Mammary epithelial cell (primary cell): ENCODE measurements at regions of chr10 and their contacts with region 1.

Region 1: DNA sequence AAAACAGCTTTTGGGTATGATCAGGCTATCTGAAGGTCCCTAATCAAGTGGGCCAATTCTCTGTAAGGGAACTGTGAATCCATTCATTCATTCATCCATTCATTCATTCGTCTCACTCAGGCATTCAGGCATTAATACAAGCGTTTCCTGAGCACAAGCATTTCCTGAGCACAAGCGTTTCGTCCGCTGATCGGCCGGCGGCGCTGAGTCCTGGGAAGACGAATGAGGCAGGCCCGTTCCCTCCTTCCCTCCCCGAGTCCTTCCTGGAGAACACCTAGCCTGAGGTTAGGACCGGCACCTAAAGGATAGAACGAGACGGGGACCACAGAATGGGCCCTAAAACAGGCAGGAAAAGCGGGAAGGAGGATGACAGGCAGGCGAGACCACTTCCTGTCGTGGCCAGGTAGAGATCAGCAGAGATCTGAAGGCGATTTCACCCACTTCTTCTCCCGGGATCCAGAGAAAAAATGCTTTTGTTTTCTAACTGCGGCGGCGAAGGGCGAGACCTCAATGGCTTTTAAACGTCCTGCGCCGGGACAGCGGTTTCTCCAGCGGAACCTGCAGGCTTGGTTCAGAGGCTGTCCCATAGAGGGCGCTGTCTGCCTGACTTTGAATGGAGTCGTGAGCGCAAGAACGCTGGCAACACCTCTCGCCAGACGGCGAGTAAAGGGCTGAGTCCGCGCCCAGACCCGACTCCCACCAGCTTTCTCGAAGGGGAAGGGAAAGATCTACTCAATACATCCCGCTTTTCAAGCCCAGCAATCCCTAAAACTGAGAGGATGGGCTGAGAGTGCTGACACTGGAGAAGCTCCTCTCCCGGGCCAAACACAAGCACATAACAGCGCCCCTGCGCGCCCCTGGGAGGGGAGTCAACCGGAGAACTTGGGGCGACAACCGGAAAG is 2.9 kb upstream of the HMX3 start:
- DNase-seq: peak; percentile 70
- H3K4me3 ChIP-seq: peak overlapping the region in 2 of 3 experiments; percentile 5 to 14
- H3K27ac ChIP-seq: no peak overlapping the region
- H3K4me1 ChIP-seq: peaks cover 30% of the 10 kb centered on the region
- H3K27me3 ChIP-seq: peaks cover 43% of the 10 kb centered on the region
- CTCF ChIP-seq: peak; percentile 86 to 92

Region 2: GRCh38 chr10:123043409-123043925 is 89.4 kb before region 1 on chr10:
- CTCF ChIA-PET with region 1: interaction called, 4 read pairs
- dilution Hi-C with region 1: no loop called
- in situ Hi-C with region 1: loop called in 1 of 2 experiments (anchors 5 kb)
- intact Hi-C with region 1: loop called (anchors 1 kb)
- DNase-seq: peak; percentile 58
- H3K4me3 ChIP-seq: no peak overlapping the region
- H3K27ac ChIP-seq: no peak overlapping the region
- H3K4me1 ChIP-seq: no peaks in the 10 kb centered on the region
- H3K27me3 ChIP-seq: no peaks in the 10 kb centered on the region
- CTCF ChIP-seq: peak; percentile 84 to 91

Region 3: GRCh38 chr10:123272171-123272570 is 139.3 kb after region 1 on chr10:
- CTCF ChIA-PET with region 1: no interaction called
- dilution Hi-C with region 1: no loop called
- in situ Hi-C with region 1: no loop called
- intact Hi-C with region 1: loop called (anchors 5 kb)
- DNase-seq: no peak
- H3K4me3 ChIP-seq: no peak overlapping the region
- H3K27ac ChIP-seq: no peak overlapping the region
- H3K4me1 ChIP-seq: peaks cover 3% of the 10 kb centered on the region
- H3K27me3 ChIP-seq: peaks cover 9% of the 10 kb centered on the region
- CTCF ChIP-seq: peak in 1 of 2 donors; percentile 41

Region 4: DNA sequence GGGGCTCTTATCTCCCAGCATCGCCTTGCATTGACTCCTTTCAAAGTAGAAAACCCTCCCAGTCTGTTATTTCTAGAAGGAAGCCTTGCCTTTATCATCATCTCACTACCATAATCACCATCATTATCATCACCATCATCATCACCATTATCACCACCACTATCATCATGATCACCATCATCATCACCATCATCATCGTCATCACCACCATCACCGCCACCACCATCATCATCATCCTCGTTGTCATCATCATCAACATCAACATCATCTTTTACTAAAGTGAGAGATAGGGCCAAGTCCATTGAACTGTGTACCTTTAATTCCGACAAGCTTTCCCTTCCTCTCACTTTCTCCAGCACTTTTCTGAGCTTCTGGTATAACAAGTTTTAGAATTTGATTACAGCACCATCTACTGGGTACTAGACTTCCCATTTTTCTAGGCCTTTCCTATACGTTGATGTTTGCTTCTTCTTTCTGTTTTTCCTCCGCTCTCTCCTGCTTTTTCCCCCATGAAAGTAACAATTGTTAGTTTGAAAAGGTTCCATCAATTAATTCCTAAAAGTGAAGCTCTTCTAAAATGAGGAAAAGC is 247.8 kb after region 1 on chr10:
- CTCF ChIA-PET with region 1: interaction called, 3 read pairs
- dilution Hi-C with region 1: no loop called
- in situ Hi-C with region 1: loop called in 1 of 2 experiments (anchors 10 kb)
- intact Hi-C with region 1: loop called (anchors 1 kb)
- DNase-seq: peak; percentile 32
- H3K4me3 ChIP-seq: no peak overlapping the region
- H3K27ac ChIP-seq: no peak overlapping the region
- H3K4me1 ChIP-seq: peaks cover 12% of the 10 kb centered on the region
- H3K27me3 ChIP-seq: no peaks in the 10 kb centered on the region
- CTCF ChIP-seq: peak; percentile 19 to 58

Region 5: DNA sequence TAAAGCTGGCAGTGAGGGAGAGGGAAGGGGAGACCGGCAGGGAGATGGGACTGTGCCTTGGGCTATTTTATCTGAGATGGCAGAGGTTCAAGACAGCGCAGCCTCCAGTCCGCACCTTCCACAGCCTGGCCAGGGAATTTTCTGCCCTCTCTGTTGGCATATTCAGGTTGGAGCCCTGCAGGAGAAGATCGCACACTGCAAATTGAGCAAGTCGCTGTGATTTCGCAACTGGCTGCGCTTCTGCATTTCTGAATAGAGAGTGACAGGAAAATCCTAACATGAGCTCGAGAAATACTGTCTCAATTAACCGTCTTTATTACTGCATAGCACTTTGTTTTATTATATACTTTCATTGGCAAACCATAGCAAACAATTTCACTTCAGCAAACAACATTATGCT is 294.6 kb after region 1 on chr10:
- CTCF ChIA-PET with region 1: no interaction called
- dilution Hi-C with region 1: no loop called
- in situ Hi-C with region 1: no loop called
- intact Hi-C with region 1: no loop called
- DNase-seq: peak; percentile 48
- H3K4me3 ChIP-seq: no peak overlapping the region
- H3K27ac ChIP-seq: no peak overlapping the region
- H3K4me1 ChIP-seq: no peaks in the 10 kb centered on the region
- H3K27me3 ChIP-seq: peaks cover 8% of the 10 kb centered on the region
- CTCF ChIP-seq: peak in 1 of 2 donors; percentile 31

Region 6: GRCh38 chr10:123573236-123574108 is 440.6 kb after region 1 on chr10:
- CTCF ChIA-PET with region 1: no interaction called
- dilution Hi-C with region 1: loop called (anchors 25 kb)
- in situ Hi-C with region 1: loop called (anchors 10 to 25 kb)
- intact Hi-C with region 1: no loop called
- DNase-seq: peak; percentile 90
- H3K4me3 ChIP-seq: no peak overlapping the region
- H3K27ac ChIP-seq: no peak overlapping the region
- H3K4me1 ChIP-seq: peaks cover 11% of the 10 kb centered on the region
- H3K27me3 ChIP-seq: peaks cover 9% of the 10 kb centered on the region
- CTCF ChIP-seq: peak; percentile 87 to 96

Region 7: DNA sequence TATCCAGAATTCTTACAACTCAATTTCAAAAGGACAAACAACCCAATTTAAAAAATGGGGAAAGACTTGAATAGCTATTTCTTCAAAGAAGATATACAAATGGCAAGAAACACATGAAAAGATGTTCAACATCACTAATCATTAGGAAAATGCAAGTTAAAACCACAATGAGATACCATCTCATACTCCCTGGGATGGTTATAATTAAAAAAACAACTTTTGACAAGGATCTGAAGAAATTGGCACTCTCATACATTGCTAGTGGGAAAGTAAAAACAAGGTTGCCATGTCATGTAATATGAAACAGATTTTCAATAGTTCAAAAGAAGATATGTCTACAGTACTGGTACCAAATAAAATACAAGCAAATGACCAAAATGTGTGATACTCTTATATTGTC is 1276.9 kb after region 1 on chr10:
- CTCF ChIA-PET with region 1: no interaction called
- dilution Hi-C with region 1: no loop called
- in situ Hi-C with region 1: no loop called
- intact Hi-C with region 1: loop called (anchors 5 kb)
- DNase-seq: no peak
- H3K4me3 ChIP-seq: no peak overlapping the region
- H3K27ac ChIP-seq: no peak overlapping the region
- H3K4me1 ChIP-seq: peaks cover 4% of the 10 kb centered on the region
- H3K27me3 ChIP-seq: no peaks in the 10 kb centered on the region
- CTCF ChIP-seq: no peak